ENCODE measurements at regions of chr6 and their contacts with region 1.

Region 1: DNA sequence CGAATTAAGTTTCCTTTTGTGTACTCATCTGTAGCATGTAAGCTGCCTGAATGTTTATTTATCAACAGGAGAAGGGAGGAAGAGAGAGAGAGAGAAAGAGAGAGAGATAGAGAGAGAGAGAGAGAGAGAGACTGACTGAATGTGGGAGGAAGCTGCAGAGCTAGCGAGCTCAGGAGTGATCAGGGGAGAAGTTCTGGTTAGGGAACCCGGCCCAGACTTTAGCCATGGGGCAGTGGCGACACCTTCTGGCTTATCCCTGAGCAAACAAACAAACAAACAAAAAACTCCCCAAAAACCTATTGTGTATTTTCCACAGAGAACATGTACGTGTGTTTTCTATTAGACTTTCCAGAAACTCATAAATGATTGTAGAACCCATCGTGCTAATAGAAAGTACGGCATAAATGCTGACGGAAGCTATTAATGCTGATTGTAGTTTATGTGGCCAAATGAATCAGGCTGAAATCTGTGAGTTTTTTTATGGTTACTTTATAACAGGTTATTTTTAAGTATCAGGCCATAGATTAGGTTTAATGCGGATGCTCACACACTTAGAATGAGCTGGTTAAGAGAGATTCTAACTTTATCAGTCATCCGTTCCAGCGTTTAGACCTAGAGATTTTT is 92.8 kb downstream of the CLIC5 start:
- DNase-seq: peak; percentile 90
- H3K4me3 Mint-ChIP-seq: peak overlapping the region; percentile 10
- H3K27ac Mint-ChIP-seq: peak overlapping the region; percentile 89
- H3K4me1 Mint-ChIP-seq: peaks cover 46% of the 10 kb centered on the region
- H3K27me3 Mint-ChIP-seq: no peaks in the 10 kb centered on the region

Region 2: GRCh38 chr6:44655412-44656342 is 1267.2 kb before region 1 on chr6:
- intact Hi-C with region 1: loop called (anchors 1 kb)
- DNase-seq: peak; percentile 92
- H3K4me3 Mint-ChIP-seq: peak overlapping the region; percentile 51
- H3K27ac Mint-ChIP-seq: peak overlapping the region; percentile 80
- H3K4me1 Mint-ChIP-seq: peaks cover 13% of the 10 kb centered on the region
- H3K27me3 Mint-ChIP-seq: peaks cover 2% of the 10 kb centered on the region

Region 3: GRCh38 chr6:45163952-45164766 is 758.7 kb before region 1 on chr6:
- intact Hi-C with region 1: loop called (anchors 1 kb)
- DNase-seq: peak; percentile 79
- H3K4me3 Mint-ChIP-seq: peak overlapping the region; percentile 58
- H3K27ac Mint-ChIP-seq: peak overlapping the region; percentile 92
- H3K4me1 Mint-ChIP-seq: peaks cover 38% of the 10 kb centered on the region
- H3K27me3 Mint-ChIP-seq: no peaks in the 10 kb centered on the region

Region 4: DNA sequence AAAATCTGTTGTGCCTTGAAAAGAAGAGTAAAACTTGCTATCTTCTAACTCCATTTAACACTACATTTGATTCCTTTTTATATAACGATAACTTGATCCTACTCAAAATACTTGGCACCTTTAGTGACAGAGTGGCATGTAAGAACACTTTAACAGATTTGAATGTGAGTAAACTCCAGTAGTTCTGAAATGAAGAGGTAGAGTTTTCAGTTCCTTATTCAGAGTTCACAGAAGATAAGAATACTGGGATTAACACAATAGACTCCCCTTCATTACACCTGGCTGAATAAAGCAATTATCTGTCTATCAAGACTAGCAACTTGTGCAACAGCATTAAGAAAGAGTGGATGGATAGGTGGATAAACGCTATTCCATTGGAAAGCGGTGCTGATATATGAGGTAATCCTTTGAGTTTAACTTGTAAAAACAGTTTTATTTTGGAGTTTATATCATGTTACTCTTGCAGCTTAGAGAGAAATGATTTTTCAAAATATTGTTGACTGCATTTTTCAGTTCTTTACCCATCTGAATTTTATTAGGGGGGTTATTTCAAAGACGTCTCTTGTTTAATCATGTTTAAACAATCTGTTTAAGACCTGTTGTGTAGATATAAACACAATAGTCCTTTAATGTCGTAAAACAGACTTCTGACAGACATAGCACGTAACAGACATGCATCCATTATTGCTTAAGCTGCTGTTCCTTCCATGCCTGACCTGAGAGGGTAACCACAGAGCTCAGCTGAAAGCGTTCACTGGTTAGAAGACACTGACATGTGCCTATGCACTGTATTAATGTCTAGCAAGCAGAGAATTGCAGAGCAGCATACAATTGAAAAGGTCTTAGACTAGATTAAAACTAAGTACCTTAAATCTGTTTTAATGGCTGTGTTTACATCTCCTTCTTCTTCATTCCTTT is 442.7 kb before region 1 on chr6:
- intact Hi-C with region 1: loop called (anchors 5 kb)
- DNase-seq: no peak
- H3K4me3 Mint-ChIP-seq: no peak overlapping the region
- H3K27ac Mint-ChIP-seq: no peak overlapping the region
- H3K4me1 Mint-ChIP-seq: peaks cover 22% of the 10 kb centered on the region
- H3K27me3 Mint-ChIP-seq: no peaks in the 10 kb centered on the region

Region 5: GRCh38 chr6:45714741-45715507 is 207.9 kb before region 1 on chr6:
- intact Hi-C with region 1: loop called (anchors 1 kb)
- DNase-seq: peak; percentile 88
- H3K4me3 Mint-ChIP-seq: peak overlapping the region; percentile 50
- H3K27ac Mint-ChIP-seq: peak overlapping the region; percentile 89
- H3K4me1 Mint-ChIP-seq: peaks cover 53% of the 10 kb centered on the region
- H3K27me3 Mint-ChIP-seq: peaks cover 3% of the 10 kb centered on the region

Region 6: DNA sequence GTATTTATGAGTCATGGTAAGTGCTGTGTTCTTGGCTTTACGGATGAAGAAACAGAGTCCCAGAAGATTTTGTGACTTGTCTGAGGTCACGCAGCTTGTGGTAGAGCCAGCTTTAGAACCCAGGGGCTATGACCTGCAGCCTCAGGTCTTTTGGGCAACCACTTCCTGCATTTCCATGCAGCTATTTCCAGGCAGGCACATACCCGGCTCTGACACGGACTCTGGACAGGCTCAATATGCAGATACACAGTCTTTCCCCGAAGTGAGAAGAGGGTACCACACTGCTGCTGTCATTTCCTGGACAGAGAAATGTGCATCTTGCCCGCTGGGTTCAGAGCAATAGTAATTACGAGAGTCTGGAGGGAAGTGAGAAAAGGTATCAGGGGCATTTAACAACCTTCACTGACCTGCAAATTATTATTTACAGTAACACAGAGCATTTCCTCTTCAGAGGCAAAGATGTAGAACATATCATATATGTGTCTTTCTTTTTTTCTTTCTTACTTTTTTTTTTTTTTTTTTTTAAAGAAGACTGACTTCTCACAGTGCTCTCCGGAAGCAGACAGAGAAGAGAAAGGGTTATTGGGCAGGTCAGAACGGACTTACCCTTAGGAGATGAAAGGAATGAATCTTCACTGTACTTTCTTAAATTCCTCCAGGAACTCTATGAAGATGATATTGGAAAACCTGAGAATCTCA is 92.2 kb before region 1 on chr6:
- intact Hi-C with region 1: loop called (anchors 2 kb)
- DNase-seq: peak; percentile 82
- H3K4me3 Mint-ChIP-seq: peak overlapping the region; percentile 76
- H3K27ac Mint-ChIP-seq: peak overlapping the region; percentile 91
- H3K4me1 Mint-ChIP-seq: peaks cover 38% of the 10 kb centered on the region
- H3K27me3 Mint-ChIP-seq: no peaks in the 10 kb centered on the region

Region 7: DNA sequence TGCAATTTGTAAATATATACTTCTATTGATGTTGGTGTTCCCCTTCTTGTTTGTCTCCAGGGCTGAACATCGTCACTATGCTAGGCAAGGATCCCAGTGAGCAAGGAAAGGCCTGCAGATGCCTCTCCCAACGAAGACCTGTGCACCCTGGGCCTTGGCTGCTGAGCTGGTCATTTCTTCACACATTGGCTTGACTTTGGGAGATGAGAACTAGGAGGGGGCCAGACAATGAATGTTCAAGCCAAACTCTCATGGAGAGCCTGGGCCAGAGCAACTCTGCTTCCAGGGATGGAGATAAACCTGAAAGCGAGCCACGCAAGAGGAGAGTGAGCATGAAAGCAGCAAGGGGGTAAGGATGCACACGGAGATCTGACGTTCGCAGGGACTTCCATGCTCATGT is 11.1 kb before region 1 on chr6:
- intact Hi-C with region 1: no loop called
- DNase-seq: no peak
- H3K4me3 Mint-ChIP-seq: no peak overlapping the region
- H3K27ac Mint-ChIP-seq: no peak overlapping the region
- H3K4me1 Mint-ChIP-seq: no peaks in the 10 kb centered on the region
- H3K27me3 Mint-ChIP-seq: peaks cover 5% of the 10 kb centered on the region

Region 8: GRCh38 chr6:46420921-46421638 is 498.2 kb after region 1 on chr6:
- intact Hi-C with region 1: no loop called
- DNase-seq: no peak
- H3K4me3 Mint-ChIP-seq: no peak overlapping the region
- H3K27ac Mint-ChIP-seq: no peak overlapping the region
- H3K4me1 Mint-ChIP-seq: no peaks in the 10 kb centered on the region
- H3K27me3 Mint-ChIP-seq: peaks cover 18% of the 10 kb centered on the region

Region 9: DNA sequence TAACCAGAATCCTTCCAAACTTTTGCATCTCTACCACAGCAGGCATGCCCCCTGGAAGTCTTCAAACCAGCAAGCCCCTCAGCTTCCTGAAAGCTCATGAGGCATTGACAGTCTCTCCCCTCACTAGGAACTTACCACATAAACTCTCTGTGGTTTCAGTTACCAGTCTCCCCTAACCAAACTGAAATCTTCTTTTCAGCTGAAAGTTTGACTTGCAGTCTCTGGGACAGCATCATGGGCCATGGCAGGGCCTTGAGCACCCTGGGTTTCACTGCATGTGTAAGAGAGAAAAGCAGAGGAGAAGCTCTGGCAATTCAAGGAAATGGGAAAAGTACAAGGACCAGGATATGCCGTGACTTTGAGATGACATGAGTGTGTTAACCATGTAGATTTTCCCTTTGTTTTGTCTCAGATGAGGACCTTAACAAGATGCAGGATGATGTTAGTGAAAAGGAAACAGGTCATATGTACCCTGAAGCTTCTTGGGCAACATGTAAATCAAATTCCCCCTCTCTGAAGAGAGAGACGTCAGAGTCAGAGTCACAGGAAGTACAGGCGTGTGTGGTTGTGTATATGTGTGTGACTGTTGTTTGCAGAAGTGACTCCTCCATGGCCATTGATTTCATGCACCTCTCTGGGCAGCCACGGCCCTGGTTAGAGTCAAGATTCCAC is 1280.6 kb after region 1 on chr6:
- intact Hi-C with region 1: no loop called
- DNase-seq: peak; percentile 58
- H3K4me3 Mint-ChIP-seq: no peak overlapping the region
- H3K27ac Mint-ChIP-seq: peak overlapping the region; percentile 27
- H3K4me1 Mint-ChIP-seq: peaks cover 12% of the 10 kb centered on the region
- H3K27me3 Mint-ChIP-seq: peaks cover 2% of the 10 kb centered on the region

Measured in activated CD4-positive, alpha-beta T cell treated with anti-CD3 and anti-CD28 coated beads, Interleukin-2, amount 10 ng/mL, durations not matched to agents 24 days and 14 days (primary cell).